Right lobe of liver (tissue), 6 donors: ENCODE measurements at regions of chr15 and their contacts with region 1.

Region 1: GRCh38 chr15:80776420-80777045 is 2.6 kb upstream of the CEMIP start:
- DNase-seq: peak; percentile 64 to 77 (median 69)
- ATAC-seq: peak; percentile 79 to 88 (median 86)
- H3K4me3 ChIP-seq: no peak overlapping the region
- H3K27ac ChIP-seq: no peak overlapping the region
- H3K4me1 ChIP-seq: peaks cover 0 to 17% (median 0%) of the 10 kb centered on the region in 4 donors
- H3K27me3 ChIP-seq: peaks cover 0 to 16% of the 10 kb centered on the region in 2 donors
- CTCF ChIP-seq: peak; percentile 84 to 90 (median 88)
- POLR2A ChIP-seq: no peak

Region 2: DNA sequence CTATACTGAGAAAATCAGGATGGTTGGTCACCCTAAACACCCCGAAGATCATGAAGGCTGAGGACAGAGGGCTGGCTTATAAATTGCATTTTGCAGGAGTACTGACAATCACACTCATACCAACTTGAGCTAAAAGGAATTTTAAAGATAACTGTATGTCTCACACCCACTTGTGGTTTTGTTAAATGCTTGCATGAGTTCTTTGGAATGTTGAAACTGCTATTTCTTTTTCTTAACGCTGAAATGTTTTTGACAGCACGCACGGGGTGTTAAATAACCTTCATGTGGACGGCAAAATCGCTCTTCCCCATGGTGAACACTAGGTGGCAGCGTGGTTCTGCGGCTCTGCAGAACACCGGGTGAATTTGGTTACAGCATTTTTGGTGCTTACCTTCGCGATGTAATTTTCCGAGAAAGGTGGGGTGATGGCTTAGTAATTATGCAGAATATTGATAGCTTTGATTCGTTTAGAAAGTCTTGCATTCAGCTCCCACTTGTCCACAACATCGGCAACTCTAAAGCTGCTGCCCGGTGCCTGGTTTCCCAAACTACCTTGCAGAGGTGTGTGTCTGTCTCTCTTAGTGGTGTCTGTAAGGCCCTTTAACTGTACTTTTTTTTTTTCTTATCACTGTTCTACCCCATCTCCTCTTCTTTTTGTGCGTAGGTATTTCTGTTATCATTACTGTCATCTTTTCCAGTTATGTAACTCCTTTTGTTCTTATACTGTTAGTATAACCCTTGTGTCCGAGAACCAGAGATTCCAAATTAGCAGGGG is 320.7 kb before region 1 on chr15:
- intact Hi-C with region 1: loop called (anchors 10 kb)
- DNase-seq: peak in 2 of 3 donors; percentile 42 to 63
- ATAC-seq: peak; percentile 84 to 90 (median 88)
- H3K4me3 ChIP-seq: no peak overlapping the region
- H3K27ac ChIP-seq: no peak overlapping the region
- H3K4me1 ChIP-seq: peaks cover 0 to 4% (median 0%) of the 10 kb centered on the region in 4 donors
- H3K27me3 ChIP-seq: no peaks in the 10 kb centered on the region
- CTCF ChIP-seq: peak; percentile 83 to 94 (median 91)
- POLR2A ChIP-seq: no peak

Region 3: GRCh38 chr15:80461356-80462095 is 315.0 kb before region 1 on chr15:
- intact Hi-C with region 1: loop called (anchors 10 kb)
- DNase-seq: no peak
- ATAC-seq: peak in 3 of 4 donors; percentile 13 to 19 (median 14)
- H3K4me3 ChIP-seq: no peak overlapping the region
- H3K27ac ChIP-seq: no peak overlapping the region
- H3K4me1 ChIP-seq: no peaks in the 10 kb centered on the region
- H3K27me3 ChIP-seq: no peaks in the 10 kb centered on the region
- CTCF ChIP-seq: no peak
- POLR2A ChIP-seq: no peak

Region 4: DNA sequence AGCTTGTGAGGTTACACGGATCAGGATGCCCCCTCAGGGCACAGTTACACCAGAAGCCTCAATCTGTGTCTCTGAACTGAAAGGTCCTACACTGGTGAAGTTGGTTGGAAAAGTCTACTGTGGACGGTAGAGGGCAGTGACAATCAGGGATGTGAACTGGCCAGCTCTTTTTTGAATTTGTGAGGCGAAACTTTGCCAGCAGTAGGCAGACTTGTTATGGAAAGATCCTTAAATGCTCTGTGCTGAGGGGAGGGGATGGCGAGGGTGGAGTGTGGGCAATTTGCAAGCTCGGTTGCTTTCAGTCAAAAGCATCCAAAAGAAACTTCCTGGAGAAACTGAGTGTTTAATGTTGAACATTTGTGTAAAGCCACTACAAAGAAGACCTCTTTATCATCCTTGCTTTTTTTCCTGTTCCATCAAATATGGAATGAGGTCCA is 208.8 kb before region 1 on chr15:
- intact Hi-C with region 1: loop called (anchors 5 kb)
- DNase-seq: peak in 1 of 3 donors; percentile 64
- ATAC-seq: peak; percentile 90 to 97 (median 93)
- H3K4me3 ChIP-seq: no peak overlapping the region
- H3K27ac ChIP-seq: no peak overlapping the region
- H3K4me1 ChIP-seq: no peaks in the 10 kb centered on the region
- H3K27me3 ChIP-seq: no peaks in the 10 kb centered on the region
- CTCF ChIP-seq: peak; percentile 73 to 83 (median 79)
- POLR2A ChIP-seq: no peak

Region 5: GRCh38 chr15:80660122-80660521 is 116.4 kb before region 1 on chr15:
- intact Hi-C with region 1: loop called in 1 of 2 experiments (anchors 10 kb)
- DNase-seq: peak in 1 of 3 donors; percentile 53
- ATAC-seq: peak in 3 of 4 donors; percentile 71 to 93 (median 86)
- H3K4me3 ChIP-seq: no peak overlapping the region
- H3K27ac ChIP-seq: no peak overlapping the region
- H3K4me1 ChIP-seq: no peaks in the 10 kb centered on the region
- H3K27me3 ChIP-seq: no peaks in the 10 kb centered on the region
- CTCF ChIP-seq: peak in 3 of 4 donors; percentile 22 to 58 (median 41)
- POLR2A ChIP-seq: no peak

Region 6: GRCh38 chr15:80887148-80887547 is 110.6 kb after region 1 on chr15:
- intact Hi-C with region 1: no loop called
- DNase-seq: no peak
- ATAC-seq: no peak
- H3K4me3 ChIP-seq: no peak overlapping the region
- H3K27ac ChIP-seq: no peak overlapping the region
- H3K4me1 ChIP-seq: no peaks in the 10 kb centered on the region
- H3K27me3 ChIP-seq: no peaks in the 10 kb centered on the region
- CTCF ChIP-seq: no peak
- POLR2A ChIP-seq: no peak

Region 7: GRCh38 chr15:80970018-80970658 is 193.6 kb after region 1 on chr15:
- intact Hi-C with region 1: loop called in 1 of 2 experiments (anchors 5 kb)
- DNase-seq: no peak
- ATAC-seq: peak; percentile 75 to 89 (median 82)
- H3K4me3 ChIP-seq: no peak overlapping the region
- H3K27ac ChIP-seq: no peak overlapping the region
- H3K4me1 ChIP-seq: no peaks in the 10 kb centered on the region
- H3K27me3 ChIP-seq: no peaks in the 10 kb centered on the region
- CTCF ChIP-seq: peak; percentile 71 to 86 (median 84)
- POLR2A ChIP-seq: no peak